ENCODE measurements at regions of chrX and their contacts with region 1.

Region 1: GRCh38 chrX:153599192-153600031 is 473 bp upstream of the CCNQ start:
- DNase-seq: peak; percentile 26
- H3K4me3 ChIP-seq: peak overlapping the region; percentile 69
- H3K27me3 ChIP-seq: no peaks in the 10 kb centered on the region
- CTCF ChIP-seq: no peak

Region 2: GRCh38 chrX:153582896-153583295 is 16.5 kb before region 1 on chrX:
- CTCF ChIA-PET with region 1: no interaction called
- POLR2A ChIA-PET with region 1: no interaction called
- DNase-seq: no peak
- H3K4me3 ChIP-seq: no peak overlapping the region
- H3K27me3 ChIP-seq: no peaks in the 10 kb centered on the region
- CTCF ChIP-seq: no peak

Region 3: DNA sequence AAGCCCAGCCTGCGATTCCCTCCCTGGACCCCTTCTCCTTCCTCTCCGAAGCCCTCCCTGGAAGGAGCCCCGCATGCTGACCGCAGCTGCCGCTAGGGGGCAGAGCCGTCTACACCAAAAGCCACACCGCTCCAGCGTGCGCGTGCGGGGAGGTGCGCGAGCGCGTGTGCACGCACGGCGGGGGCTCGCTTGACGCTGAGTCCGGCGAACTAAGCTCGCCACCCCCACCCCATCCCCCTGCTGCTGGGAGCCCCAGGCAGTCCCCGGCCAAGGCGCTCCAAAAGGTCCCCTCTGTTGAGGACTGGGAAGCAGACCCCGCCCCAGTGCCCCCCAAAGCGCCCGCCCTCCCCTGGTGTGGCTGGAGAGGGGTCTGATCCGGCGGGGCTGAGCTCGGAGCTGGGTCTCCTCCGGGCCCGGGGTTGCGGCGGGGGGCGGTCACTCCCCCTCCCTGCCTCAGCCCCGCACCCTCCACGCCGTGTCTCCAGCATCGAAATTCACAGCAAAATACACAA is 10.6 kb after region 1 on chrX:
- CTCF ChIA-PET with region 1: interaction called, 15 read pairs
- POLR2A ChIA-PET with region 1: interaction called, 5 read pairs
- DNase-seq: no peak
- H3K4me3 ChIP-seq: peak overlapping the region; percentile 39
- H3K27me3 ChIP-seq: 0 out of 2 replicates have a peak, but pooled peaks cover 2% of the 10 kb centered on the region
- CTCF ChIP-seq: peak; percentile 80

Region 4: DNA sequence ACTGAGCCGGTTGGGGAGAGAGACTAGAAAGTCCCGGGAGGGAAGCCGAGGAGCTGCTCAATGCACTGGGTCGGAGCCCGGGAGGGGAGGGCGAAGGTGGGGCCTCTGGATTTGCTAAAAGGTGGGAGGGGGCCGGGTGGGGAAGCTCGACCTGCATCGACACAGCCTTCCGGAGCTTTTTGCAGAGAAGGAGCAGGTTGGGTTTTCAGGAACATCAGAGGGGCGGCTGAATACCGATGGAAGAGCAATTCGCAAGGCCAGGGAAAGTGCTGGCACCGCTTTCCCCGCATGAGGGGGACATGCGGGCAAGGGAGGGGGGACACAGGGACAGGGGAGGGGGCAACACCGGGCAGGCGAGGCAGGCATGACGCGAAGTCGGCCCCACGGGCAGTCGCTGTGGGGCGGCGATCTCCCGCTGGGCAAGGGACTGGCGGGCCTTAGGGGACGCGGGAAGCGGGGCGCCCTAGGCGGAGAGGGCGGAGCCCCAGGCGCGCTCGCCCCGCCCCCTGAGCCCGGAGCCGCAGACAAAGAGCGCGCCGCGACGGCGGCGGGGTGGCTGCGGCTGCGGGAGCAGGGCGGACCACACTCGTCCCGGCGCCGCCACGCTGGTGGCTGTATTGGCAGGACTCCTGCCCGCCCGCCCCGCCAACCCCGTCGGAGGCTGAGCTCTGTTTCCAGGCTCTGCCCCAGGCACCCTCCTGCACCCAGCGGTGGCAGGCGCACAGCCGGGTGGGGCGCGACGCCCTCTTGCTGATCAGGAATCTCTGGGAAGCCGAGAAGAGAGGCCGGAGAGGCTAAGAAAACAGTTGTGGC is 219.4 kb after region 1 on chrX:
- CTCF ChIA-PET with region 1: no interaction called
- POLR2A ChIA-PET with region 1: interaction called, 12 read pairs
- DNase-seq: no peak
- H3K4me3 ChIP-seq: peak overlapping the region; percentile 38
- H3K27me3 ChIP-seq: 0 out of 2 replicates have a peak, but pooled peaks cover 2% of the 10 kb centered on the region
- CTCF ChIP-seq: no peak

Region 5: GRCh38 chrX:154116426-154117211 is 517.2 kb after region 1 on chrX:
- CTCF ChIA-PET with region 1: no interaction called
- POLR2A ChIA-PET with region 1: no interaction called
- DNase-seq: no peak
- H3K4me3 ChIP-seq: no peak overlapping the region
- H3K27me3 ChIP-seq: peaks cover 1% of the 10 kb centered on the region; the same call in 1 of the 2 replicates
- CTCF ChIP-seq: no peak